CD4-positive, alpha-beta memory T cell (primary cell): ENCODE measurements at regions of chr16 and their contacts with region 1.

Region 1: GRCh38 chr16:15672514-15673167 is 22.6 kb downstream of the NDE1 start:
- DNase-seq: peak; percentile 86 to 94 (median 91)
- H3K4me3 ChIP-seq: no peak overlapping the region
- H3K4me3 Mint-ChIP-seq: peak overlapping the region; percentile 23 to 80 (median 76)
- H3K27ac ChIP-seq: peak overlapping the region; percentile 91
- H3K27ac Mint-ChIP-seq: peak overlapping the region; percentile 87 to 99 (median 98)
- H3K4me1 ChIP-seq: peaks cover 51% of the 10 kb centered on the region
- H3K4me1 Mint-ChIP-seq: peaks cover 31 to 60% (median 47%) of the 10 kb centered on the region in 4 donors
- H3K27me3 ChIP-seq: no peaks in the 10 kb centered on the region
- H3K27me3 Mint-ChIP-seq: no peaks in the 10 kb centered on the region

Region 2: DNA sequence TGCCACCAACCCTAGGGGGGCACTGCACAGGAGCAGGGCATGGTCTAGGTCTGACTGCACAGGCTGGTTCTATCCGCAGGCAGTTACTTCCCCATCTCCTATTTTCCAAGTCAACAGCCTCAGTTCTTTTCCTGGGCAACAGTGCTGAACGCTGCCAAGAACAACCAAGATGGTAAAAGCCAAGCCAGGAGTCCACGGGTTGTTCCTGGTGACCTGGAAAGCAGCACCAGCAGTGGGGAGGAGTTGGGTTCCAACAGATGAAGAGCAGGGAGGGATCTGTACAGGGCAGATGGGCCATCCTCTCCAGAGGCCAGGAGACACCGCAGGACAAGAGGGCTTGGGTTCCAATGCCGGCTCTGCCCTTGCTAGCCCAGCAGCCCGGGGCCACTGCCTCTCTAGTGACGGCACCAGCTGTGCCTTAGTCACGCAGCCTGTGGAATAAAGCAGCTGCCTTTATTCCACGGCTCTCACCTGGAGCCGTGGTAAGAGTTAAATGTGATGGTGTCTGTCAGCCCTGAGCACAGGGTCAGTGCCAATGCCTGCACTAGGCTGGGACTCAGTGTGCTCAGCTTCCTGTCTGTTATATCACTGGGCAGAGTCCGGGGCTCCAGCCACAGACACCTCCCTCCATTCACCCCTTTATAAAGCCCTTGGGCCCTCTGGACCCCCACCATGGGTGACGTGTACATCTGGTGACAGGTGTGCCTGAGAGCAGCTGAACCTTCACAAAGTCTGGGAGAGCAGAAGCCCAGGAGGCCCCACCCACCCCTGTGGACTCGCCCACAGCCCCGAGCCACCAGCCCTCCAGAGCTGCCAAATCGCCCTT is 74.6 kb before region 1 on chr16:
- CTCF ChIA-PET with region 1: no interaction called
- POLR2A ChIA-PET with region 1: no interaction called
- intact Hi-C with region 1: no loop called
- DNase-seq: no peak
- H3K4me3 ChIP-seq: no peak overlapping the region
- H3K4me3 Mint-ChIP-seq: no peak overlapping the region
- H3K27ac ChIP-seq: no peak overlapping the region
- H3K27ac Mint-ChIP-seq: peak overlapping the region in 3 of 7 donors; percentile 41 to 53 (median 53)
- H3K4me1 ChIP-seq: peaks cover 8% of the 10 kb centered on the region
- H3K4me1 Mint-ChIP-seq: peaks cover 6 to 19% (median 10%) of the 10 kb centered on the region in 4 donors
- H3K27me3 ChIP-seq: no peaks in the 10 kb centered on the region
- H3K27me3 Mint-ChIP-seq: no peaks in the 10 kb centered on the region

Region 3: DNA sequence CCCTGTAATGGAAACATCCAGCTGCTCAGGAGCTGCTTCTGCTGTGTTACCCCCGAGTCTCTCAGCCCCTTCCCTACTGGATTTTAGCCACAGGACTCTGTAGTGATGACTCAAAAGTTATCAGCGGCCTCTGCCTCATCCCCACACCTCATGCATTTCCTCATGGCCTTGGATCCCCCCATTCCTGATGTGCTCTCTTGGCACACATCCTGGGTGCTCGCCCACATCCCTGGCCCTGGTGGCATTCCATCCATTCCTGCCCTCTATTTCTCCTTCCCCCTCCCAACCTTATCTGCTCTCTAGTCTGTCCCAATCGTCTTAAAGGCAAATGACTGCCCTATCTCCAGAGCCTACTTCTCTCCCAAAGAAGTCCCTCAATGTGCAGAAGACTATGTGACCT is 54.2 kb before region 1 on chr16:
- CTCF ChIA-PET with region 1: no interaction called
- POLR2A ChIA-PET with region 1: no interaction called
- intact Hi-C with region 1: no loop called
- DNase-seq: no peak
- H3K4me3 ChIP-seq: no peak overlapping the region
- H3K4me3 Mint-ChIP-seq: no peak overlapping the region
- H3K27ac ChIP-seq: no peak overlapping the region
- H3K27ac Mint-ChIP-seq: peak overlapping the region in 6 of 7 donors; percentile 46 to 82 (median 64)
- H3K4me1 ChIP-seq: no peaks in the 10 kb centered on the region
- H3K4me1 Mint-ChIP-seq: peaks cover 0 to 1% (median 0%) of the 10 kb centered on the region in 4 donors
- H3K27me3 ChIP-seq: no peaks in the 10 kb centered on the region
- H3K27me3 Mint-ChIP-seq: no peaks in the 10 kb centered on the region

Region 4: GRCh38 chr16:15650019-15650697 is 22.5 kb before region 1 on chr16 and contains the start of gene NDE1:
- CTCF ChIA-PET with region 1: interaction called, 4 read pairs
- POLR2A ChIA-PET with region 1: interaction called, 83 read pairs
- intact Hi-C with region 1: loop called (anchors 2 kb)
- DNase-seq: peak; percentile 76 to 87 (median 79)
- H3K4me3 ChIP-seq: peak within 1 kb of the TSS; percentile 76 to 88
- H3K4me3 Mint-ChIP-seq: peak within 1 kb of the TSS; percentile 97 to 100 (median 99)
- H3K27ac ChIP-seq: peak within 1 kb of the TSS; percentile 98
- H3K27ac Mint-ChIP-seq: peak within 1 kb of the TSS; percentile 98 to 100 (median 99)
- H3K4me1 ChIP-seq: peaks cover 48% of the 10 kb centered on the region
- H3K4me1 Mint-ChIP-seq: peaks cover 19 to 43% (median 32%) of the 10 kb centered on the region in 4 donors
- H3K27me3 ChIP-seq: no peaks in the 10 kb centered on the region
- H3K27me3 Mint-ChIP-seq: no peaks in the 10 kb centered on the region
- total RNA-seq, gene NDE1: 124 to 128 TPM

Region 5: DNA sequence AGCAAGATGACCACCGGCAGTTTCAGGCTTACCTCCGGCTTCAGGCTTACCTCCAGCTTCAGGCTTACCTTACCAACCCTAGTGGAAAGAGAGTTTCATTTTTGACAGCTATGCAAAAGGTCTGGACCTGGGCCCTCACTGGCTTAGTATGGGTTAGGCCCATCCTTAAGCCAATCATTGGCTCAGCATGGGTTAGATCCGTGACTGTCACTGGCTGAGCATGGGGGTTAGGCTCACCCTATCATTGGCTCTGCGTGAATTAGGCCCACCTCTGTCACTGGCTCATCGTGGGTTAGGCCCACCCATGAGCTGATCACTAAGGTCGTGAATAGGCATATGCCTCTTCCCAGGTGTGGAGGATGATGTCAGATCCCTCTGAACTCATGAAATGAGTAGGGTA is 14.5 kb before region 1 on chr16:
- CTCF ChIA-PET with region 1: interaction called, 3 read pairs
- POLR2A ChIA-PET with region 1: interaction called, 15 read pairs
- intact Hi-C with region 1: no loop called
- DNase-seq: no peak
- H3K4me3 ChIP-seq: no peak overlapping the region
- H3K4me3 Mint-ChIP-seq: peak overlapping the region in 2 of 8 donors; percentile 13 to 23
- H3K27ac ChIP-seq: no peak overlapping the region
- H3K27ac Mint-ChIP-seq: peak overlapping the region; percentile 77 to 87 (median 79)
- H3K4me1 ChIP-seq: peaks cover 68% of the 10 kb centered on the region
- H3K4me1 Mint-ChIP-seq: peaks cover 43 to 73% (median 61%) of the 10 kb centered on the region in 4 donors
- H3K27me3 ChIP-seq: no peaks in the 10 kb centered on the region
- H3K27me3 Mint-ChIP-seq: no peaks in the 10 kb centered on the region